Endothelial cell of umbilical vein (primary cell): ENCODE measurements at regions of chr9 and their contacts with region 1.

Region 1: DNA sequence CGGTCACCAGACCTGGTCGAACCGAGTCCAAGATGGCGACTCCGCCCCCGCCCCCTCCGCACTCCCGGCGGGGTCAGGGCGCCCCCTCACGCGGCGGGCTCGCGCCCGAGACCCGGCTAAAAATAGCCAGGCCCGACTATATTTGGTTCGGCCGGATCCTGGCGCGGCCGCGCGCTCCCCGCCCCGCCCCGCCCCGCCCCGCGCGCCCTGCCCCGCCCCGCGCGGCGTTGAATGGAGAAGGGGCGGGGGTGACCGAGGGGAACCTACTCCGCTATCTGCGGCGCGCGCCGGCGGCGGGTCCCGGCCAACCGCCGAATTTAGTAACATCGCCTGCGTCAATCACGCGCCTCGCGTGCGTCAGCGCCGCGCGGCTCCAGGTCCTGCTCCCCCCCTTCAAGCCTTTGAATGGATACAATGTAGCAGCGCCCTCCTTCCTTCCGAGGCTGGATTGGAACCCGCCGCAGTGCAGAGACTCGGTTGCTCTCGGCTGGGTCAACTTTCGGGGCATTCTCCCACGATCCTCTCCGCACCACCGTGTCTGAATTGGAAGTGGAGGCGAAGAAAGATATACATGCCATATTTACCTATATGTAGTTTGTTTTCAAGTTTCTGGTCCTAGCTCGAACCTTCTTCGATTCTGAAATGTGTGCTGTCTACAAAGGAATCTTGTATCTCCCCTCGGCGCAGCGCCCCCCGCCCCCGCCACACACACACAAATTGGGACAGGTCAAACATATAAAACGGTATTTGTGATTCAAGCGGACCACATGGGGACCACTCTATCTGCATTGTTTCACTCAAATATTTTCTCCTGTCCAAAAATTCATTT is 1.6 kb upstream of the NR4A3 start:
- DNase-seq: peak; percentile 93
- H3K4me3 ChIP-seq: peak overlapping the region; percentile 47 to 82 (median 78)
- H3K27ac ChIP-seq: peak overlapping the region; percentile 75
- H3K4me1 ChIP-seq: peaks cover 25% of the 10 kb centered on the region
- H3K27me3 ChIP-seq: peaks cover 8% of the 10 kb centered on the region in 2 experiments
- CTCF ChIP-seq: peak; percentile 4 to 9
- POLR2A ChIP-seq: no peak

Region 2: GRCh38 chr9:99162759-99163364 is 657.2 kb before region 1 on chr9:
- CTCF ChIA-PET with region 1: no interaction called
- POLR2A ChIA-PET with region 1: no interaction called
- dilution Hi-C with region 1: no loop called
- intact Hi-C with region 1: loop called (anchors 5 kb)
- DNase-seq: peak; percentile 62
- H3K4me3 ChIP-seq: no peak overlapping the region
- H3K27ac ChIP-seq: no peak overlapping the region
- H3K4me1 ChIP-seq: peaks cover 3% of the 10 kb centered on the region
- H3K27me3 ChIP-seq: peaks cover 2 to 7% of the 10 kb centered on the region in 2 experiments
- CTCF ChIP-seq: peak; percentile 43 to 44
- POLR2A ChIP-seq: no peak

Region 3: DNA sequence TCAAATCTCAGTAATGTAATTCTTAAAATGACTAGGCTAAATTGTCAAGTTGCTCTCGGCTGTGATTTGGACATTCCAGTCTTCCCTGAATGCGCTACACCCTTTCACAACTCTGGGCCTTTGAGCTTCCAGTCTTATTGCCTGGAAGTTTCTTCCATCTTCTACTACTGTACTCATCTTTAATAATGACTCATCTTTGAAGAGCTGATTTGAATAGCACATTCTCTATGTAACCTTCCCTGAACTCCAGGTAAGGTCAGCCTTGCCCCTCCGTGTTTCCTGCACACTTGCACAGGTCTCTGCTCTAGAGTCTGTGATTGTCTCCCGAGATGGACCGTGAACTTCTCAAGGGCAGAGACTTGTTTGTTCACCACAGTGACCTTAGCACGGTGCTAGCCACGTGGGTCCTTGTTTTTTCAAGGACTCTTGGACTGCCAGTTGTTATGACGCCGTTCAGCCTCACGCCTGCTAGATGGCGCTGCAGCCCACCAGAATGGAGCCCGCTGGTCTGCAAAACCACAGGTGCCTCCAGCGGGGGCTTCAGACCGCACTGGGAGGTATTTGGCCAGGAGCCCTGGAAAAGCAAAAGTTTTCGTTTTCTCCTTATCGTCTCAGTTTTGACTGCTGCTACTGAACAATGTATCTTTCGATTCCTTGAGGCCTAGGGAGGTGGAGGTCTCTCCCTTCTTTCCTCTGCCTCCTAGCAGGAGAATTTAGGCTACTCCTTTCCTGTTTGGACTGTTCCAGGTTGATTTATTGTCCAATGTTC is 553.6 kb before region 1 on chr9:
- CTCF ChIA-PET with region 1: interaction called, 3 read pairs
- POLR2A ChIA-PET with region 1: no interaction called
- dilution Hi-C with region 1: no loop called
- intact Hi-C with region 1: loop called (anchors 1 kb)
- DNase-seq: peak; percentile 75
- H3K4me3 ChIP-seq: no peak overlapping the region
- H3K27ac ChIP-seq: no peak overlapping the region
- H3K4me1 ChIP-seq: peaks cover 20% of the 10 kb centered on the region
- H3K27me3 ChIP-seq: no peaks in the 10 kb centered on the region
- CTCF ChIP-seq: peak; percentile 89 to 91
- POLR2A ChIP-seq: no peak

Region 4: GRCh38 chr9:99796231-99796630 is 23.8 kb before region 1 on chr9:
- CTCF ChIA-PET with region 1: no interaction called
- POLR2A ChIA-PET with region 1: no interaction called
- dilution Hi-C with region 1: no loop called
- intact Hi-C with region 1: no loop called
- DNase-seq: no peak
- H3K4me3 ChIP-seq: no peak overlapping the region
- H3K27ac ChIP-seq: no peak overlapping the region
- H3K4me1 ChIP-seq: no peaks in the 10 kb centered on the region
- H3K27me3 ChIP-seq: peaks cover 0 to 1% of the 10 kb centered on the region in 2 experiments
- CTCF ChIP-seq: no peak
- POLR2A ChIP-seq: no peak

Region 5: DNA sequence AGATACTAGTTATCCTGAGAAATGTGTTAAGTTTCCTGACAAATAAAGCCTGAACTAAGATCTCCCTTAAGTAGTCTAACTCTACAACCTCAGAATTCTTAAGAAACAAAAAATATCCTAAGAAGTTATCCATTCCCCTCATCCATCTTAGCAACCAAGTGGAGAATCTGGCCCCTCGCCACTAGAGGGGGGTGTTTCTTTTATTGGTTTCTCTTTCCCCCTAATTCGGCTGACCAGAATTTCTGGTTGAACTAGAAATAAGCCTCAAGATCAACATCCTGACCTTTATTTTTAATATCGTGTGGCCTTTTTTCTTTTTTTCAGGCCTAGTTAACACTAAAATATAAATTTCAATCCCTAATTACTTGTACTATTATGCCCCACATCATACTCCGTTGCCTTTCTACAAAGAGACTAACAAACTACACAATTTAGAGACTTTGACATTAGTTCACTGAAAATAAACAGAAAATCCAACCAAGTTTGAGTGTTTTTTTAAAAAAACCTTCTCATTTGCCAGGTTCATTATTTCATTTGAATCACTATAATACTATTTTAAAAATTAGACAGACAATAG is 12.7 kb before region 1 on chr9:
- CTCF ChIA-PET with region 1: interaction called, 9 read pairs
- POLR2A ChIA-PET with region 1: no interaction called
- dilution Hi-C with region 1: no loop called
- intact Hi-C with region 1: loop called (anchors 1 kb)
- DNase-seq: peak; percentile 61
- H3K4me3 ChIP-seq: no peak overlapping the region
- H3K27ac ChIP-seq: no peak overlapping the region
- H3K4me1 ChIP-seq: no peaks in the 10 kb centered on the region
- H3K27me3 ChIP-seq: no peaks in the 10 kb centered on the region
- CTCF ChIP-seq: peak; percentile 70 to 72
- POLR2A ChIP-seq: no peak

Region 6: DNA sequence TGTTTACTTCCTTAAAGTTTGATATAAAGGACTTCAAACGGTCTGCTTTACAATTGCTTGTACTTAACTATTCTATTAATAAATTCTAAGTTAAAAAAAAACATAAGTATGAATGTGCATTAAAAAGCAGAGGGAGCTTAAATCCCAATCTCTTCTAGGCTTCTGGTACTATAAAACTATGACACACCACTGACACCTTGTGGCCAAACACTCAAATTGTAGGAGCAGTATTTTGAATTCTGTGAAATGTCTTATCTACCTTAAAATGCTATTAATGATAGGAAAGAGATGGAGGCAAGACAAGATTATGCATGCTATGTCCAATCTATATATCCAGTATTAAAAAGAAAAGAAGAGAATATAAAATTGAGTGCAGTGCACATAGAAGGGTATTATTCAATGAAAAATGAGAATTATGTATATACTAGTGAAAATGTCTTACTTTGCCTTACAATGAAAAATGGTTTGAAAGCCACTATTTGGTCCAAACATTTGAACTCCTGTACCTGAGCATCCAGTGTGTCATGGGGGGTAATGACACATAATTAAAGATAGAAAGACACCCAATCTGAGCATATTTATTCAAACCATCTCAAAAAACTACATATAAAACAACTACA is 191.1 kb after region 1 on chr9:
- CTCF ChIA-PET with region 1: interaction called, 9 read pairs
- POLR2A ChIA-PET with region 1: no interaction called
- dilution Hi-C with region 1: no loop called
- intact Hi-C with region 1: loop called (anchors 5 kb)
- DNase-seq: peak; percentile 62
- H3K4me3 ChIP-seq: no peak overlapping the region
- H3K27ac ChIP-seq: no peak overlapping the region
- H3K4me1 ChIP-seq: no peaks in the 10 kb centered on the region
- H3K27me3 ChIP-seq: no peaks in the 10 kb centered on the region
- CTCF ChIP-seq: peak; percentile 37 to 44
- POLR2A ChIP-seq: no peak

Region 7: DNA sequence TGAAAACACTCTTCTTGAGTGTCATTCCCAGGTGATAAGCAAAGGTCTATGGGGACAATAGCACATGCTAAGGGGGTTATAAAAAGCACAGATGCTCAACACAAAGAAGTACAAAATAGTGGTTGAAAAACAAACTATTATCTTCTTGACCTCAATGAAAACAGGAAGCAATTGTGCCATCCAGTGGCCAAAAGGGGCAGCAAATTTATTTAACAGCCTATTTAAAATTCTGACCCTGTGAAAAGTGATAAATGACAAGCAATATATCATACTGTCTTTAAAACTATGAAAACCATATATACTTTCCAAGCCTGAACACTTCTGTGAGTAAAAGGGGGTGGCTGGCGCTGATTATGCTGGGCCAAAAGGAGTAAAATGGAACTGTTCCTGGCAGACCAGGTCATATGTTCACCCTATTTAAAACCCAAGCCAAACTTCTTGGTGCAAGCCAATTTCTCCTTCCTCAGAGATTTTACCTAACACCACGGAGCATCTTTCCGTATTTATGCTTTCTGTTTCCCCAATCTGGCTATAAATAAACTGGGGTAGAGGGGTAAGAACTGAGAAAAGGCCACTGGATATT is 503.0 kb after region 1 on chr9:
- CTCF ChIA-PET with region 1: interaction called, 12 read pairs
- POLR2A ChIA-PET with region 1: no interaction called
- dilution Hi-C with region 1: no loop called
- intact Hi-C with region 1: loop called (anchors 1 kb)
- DNase-seq: peak; percentile 52
- H3K4me3 ChIP-seq: no peak overlapping the region
- H3K27ac ChIP-seq: no peak overlapping the region
- H3K4me1 ChIP-seq: no peaks in the 10 kb centered on the region
- H3K27me3 ChIP-seq: no peaks in the 10 kb centered on the region
- CTCF ChIP-seq: peak; percentile 38 to 50
- POLR2A ChIP-seq: no peak